ENCODE measurements at regions of chr17 and their contacts with region 1.

Region 1: DNA sequence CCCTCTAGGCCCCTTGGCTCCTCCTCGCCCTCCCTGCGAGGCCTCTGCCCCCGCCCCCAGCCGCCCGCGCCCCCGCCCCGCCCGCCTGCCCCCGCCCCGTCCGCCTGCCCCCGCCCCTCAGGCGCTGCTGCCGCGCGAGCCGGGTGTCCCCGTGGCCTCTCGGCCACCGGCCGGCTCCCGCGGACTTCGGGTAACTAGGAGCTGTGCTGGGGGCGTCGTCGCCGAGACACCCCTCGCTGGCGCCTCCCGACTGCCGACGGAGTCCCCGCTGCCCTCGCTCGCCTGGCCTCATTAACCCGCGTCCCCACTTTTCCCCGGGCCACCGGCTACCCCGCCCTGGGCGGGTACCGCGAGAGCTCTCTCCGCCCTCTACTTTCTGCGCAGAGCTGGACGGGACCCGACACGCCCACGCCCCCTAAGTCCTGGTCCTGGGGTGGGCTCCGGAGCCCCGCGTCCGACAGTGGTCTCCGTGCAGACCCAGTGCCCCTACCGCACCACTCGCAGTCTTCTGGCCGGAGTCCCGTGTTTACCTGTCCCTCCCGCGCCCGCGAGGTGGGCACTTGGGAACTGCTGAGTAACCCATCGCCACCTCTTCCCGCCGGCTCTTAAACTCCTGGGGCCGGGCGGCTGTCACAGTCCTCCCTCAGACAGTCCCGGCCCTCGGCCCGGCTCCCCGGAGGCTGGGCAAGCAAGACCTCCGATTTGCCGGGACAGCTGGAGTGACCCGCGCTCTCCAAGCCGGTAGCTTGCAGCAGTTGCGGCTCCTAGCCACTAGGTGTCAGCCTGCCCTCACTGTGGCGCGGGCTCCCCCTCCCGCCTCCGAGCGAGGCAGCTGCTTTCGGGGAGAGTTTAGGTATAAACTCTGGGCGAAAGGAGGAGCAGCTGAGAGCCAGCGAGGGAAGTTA is at the start of gene TLCD1:
- DNase-seq: peak; percentile 82 to 98
- H3K4me3 ChIP-seq: peak within 1 kb of the TSS; percentile 57
- H3K4me3 Mint-ChIP-seq: peak within 1 kb of the TSS; percentile 92
- H3K27ac Mint-ChIP-seq: peak within 1 kb of the TSS; percentile 96
- H3K4me1 ChIP-seq: peaks cover 23% of the 10 kb centered on the region
- H3K4me1 Mint-ChIP-seq: peaks cover 38% of the 10 kb centered on the region
- H3K27me3 ChIP-seq: no peaks in the 10 kb centered on the region
- H3K27me3 Mint-ChIP-seq: no peaks in the 10 kb centered on the region
- CTCF ChIP-seq: peak; percentile 98 to 99
- total RNA-seq, gene TLCD1: 31.7 and 37.9 TPM in 2 replicates

Region 2: GRCh38 chr17:28675980-28676379 is 50.5 kb before region 1 on chr17:
- CTCF ChIA-PET with region 1: interaction called, 10 read pairs
- POLR2A ChIA-PET with region 1: no interaction called
- intact Hi-C with region 1: no loop called
- DNase-seq: peak; percentile 50 to 59
- H3K4me3 ChIP-seq: no peak overlapping the region
- H3K4me3 Mint-ChIP-seq: no peak overlapping the region
- H3K27ac Mint-ChIP-seq: no peak overlapping the region
- H3K4me1 ChIP-seq: no peaks in the 10 kb centered on the region
- H3K4me1 Mint-ChIP-seq: no peaks in the 10 kb centered on the region
- H3K27me3 ChIP-seq: no peaks in the 10 kb centered on the region
- H3K27me3 Mint-ChIP-seq: no peaks in the 10 kb centered on the region
- CTCF ChIP-seq: peak in 1 of 2 experiments; percentile 88

Region 3: DNA sequence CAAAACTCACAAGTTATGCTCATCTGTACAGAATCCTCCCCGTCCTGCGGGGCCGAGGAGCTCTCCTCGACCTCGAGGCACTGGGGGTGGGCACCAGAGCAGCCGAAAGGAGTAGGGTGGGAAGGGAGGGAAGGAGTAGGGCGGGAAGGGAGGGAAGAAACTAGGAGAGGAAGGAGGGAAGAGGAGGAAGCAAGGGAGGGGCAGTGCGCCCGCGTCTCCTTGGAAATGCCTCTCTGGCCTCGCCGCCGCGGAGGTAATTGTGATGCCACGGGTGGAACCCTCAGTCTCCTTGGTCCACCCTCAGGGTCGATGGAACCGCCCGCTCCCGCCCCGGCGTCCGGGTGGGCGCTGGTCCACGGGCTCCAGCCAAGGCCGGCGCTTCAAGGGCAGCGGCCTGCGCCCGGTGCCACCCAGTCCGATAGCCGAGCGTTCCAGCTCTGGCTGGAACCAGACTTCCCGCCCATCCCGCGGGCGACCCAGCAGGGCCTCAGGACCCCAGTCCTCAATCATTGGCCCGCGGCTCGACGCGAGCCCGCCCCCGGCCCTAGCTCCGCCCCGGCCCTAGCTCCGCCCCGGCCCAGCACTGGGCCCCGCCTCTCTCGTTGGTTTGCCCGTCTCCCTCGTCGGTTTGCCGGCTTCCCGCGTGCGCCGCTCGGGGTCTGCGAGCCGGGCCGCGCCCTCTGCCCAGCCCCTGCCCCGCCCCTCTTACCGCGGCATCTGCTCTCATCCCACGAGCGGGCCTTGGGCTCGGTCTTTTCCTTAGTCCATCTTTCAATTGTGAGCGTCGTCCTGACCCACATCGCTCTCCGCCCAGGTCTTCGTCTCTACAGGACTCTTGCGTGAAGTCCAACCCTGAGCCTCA is 15.4 kb before region 1 on chr17:
- CTCF ChIA-PET with region 1: interaction called, 33 read pairs
- POLR2A ChIA-PET with region 1: interaction called, 213 read pairs
- intact Hi-C with region 1: no loop called
- DNase-seq: peak; percentile 95 to 98
- H3K4me3 ChIP-seq: peak overlapping the region; percentile 64
- H3K4me3 Mint-ChIP-seq: peak overlapping the region; percentile 82
- H3K27ac Mint-ChIP-seq: peak overlapping the region; percentile 87
- H3K4me1 ChIP-seq: peaks cover 11% of the 10 kb centered on the region
- H3K4me1 Mint-ChIP-seq: peaks cover 6% of the 10 kb centered on the region
- H3K27me3 ChIP-seq: no peaks in the 10 kb centered on the region
- H3K27me3 Mint-ChIP-seq: no peaks in the 10 kb centered on the region
- CTCF ChIP-seq: no peak

Region 4: DNA sequence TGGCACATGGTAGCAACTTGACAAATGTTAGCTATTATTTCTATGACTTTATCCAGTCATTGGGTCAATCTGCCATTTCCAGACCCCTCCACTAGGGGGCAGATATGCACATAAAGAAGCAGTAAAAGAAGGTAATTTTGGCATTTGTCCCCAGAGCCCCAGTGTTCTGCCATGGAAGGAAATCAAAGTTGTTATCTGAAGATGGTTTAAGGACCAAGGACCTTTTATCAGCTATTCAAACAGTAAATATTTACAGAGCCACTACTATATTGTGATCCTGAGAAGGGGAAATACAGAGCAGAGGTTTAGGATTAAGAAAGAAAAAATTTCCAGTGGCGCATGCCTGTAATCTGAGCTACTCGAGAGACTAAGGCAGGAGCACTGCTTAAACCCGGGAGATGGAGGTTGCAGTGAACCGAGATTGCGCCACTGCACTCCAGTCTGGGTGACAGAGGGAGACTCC is 37.4 kb after region 1 on chr17:
- CTCF ChIA-PET with region 1: interaction called, 69 read pairs
- POLR2A ChIA-PET with region 1: interaction called, 10 read pairs
- intact Hi-C with region 1: no loop called
- DNase-seq: peak; percentile 80 to 87
- H3K4me3 ChIP-seq: no peak overlapping the region
- H3K4me3 Mint-ChIP-seq: no peak overlapping the region
- H3K27ac Mint-ChIP-seq: peak overlapping the region; percentile 13
- H3K4me1 ChIP-seq: no peaks in the 10 kb centered on the region
- H3K4me1 Mint-ChIP-seq: no peaks in the 10 kb centered on the region
- H3K27me3 ChIP-seq: no peaks in the 10 kb centered on the region
- H3K27me3 Mint-ChIP-seq: no peaks in the 10 kb centered on the region
- CTCF ChIP-seq: peak; percentile 85 to 88

Region 5: DNA sequence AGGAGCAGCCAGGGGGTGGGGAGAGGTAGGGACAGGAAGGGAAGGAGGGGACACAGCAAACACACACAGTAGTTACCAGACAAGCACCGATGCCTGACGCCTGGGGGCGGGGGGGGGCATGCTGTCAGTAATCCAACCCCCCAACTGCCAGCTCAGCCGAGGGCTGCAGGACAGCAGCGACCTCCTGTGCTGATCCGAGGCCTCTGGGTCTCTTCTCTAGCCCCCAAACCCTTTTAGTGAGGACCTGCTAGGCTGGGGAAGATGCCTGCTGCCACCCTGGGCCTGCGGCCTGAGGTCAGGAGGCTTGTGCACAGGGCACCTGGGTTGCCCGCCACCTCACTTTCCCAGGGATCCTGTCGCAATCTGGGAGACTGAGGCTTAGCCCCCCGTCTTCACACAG is 159.5 kb after region 1 on chr17:
- CTCF ChIA-PET with region 1: no interaction called
- POLR2A ChIA-PET with region 1: no interaction called
- intact Hi-C with region 1: no loop called
- DNase-seq: no peak
- H3K4me3 ChIP-seq: no peak overlapping the region
- H3K4me3 Mint-ChIP-seq: no peak overlapping the region
- H3K27ac Mint-ChIP-seq: no peak overlapping the region
- H3K4me1 ChIP-seq: no peaks in the 10 kb centered on the region
- H3K4me1 Mint-ChIP-seq: no peaks in the 10 kb centered on the region
- H3K27me3 ChIP-seq: no peaks in the 10 kb centered on the region
- H3K27me3 Mint-ChIP-seq: no peaks in the 10 kb centered on the region
- CTCF ChIP-seq: no peak

Region 6: DNA sequence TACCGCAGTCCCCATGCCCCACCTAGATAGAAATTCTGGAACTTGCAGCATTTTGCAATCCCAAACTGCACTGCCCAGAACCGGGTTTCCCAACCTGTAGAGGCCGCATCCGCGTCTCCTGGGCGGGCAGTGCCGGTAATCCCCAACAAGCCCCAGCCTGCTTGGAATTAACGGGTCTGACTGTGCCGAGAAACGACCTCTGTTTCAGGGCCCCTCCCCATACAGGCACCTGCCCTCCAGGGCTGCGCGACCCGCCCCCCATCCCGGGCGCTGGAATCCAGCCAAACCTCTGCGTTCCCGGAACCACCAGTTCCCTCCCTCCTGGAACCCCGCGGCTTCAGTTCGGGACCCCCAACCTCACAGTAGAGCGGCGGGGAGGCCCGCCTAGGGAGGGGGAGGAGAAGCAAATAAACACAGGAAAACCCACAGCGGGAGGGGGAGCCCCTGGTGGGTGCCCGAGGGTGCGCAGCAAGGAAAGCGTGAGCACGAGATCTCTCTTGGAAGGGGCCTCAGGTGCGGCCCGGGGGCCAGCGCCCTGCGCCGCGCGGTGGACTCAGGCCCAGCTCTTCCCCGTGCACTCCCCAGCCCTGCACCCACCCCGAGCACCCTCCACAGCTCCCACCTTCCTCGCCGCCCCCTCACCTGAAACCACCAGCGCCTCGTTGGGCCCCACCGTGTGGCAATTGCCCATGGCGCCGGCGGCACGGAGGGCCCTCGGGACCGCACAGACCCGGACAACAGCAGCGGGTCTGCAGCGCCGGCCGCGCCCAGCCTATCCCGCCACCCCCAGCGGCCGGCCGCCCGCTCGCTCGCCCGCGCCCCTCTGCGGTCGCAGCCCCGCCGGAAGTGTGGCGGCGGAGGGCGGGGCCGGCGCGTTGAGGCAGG is 170.6 kb after region 1 on chr17 and contains the start of gene FLOT2:
- CTCF ChIA-PET with region 1: interaction called, 15 read pairs
- POLR2A ChIA-PET with region 1: interaction called, 3 read pairs
- intact Hi-C with region 1: loop called (anchors 1 kb)
- DNase-seq: peak; percentile 87
- H3K4me3 ChIP-seq: peak within 1 kb of the TSS; percentile 86
- H3K4me3 Mint-ChIP-seq: peak within 1 kb of the TSS; percentile 89
- H3K27ac Mint-ChIP-seq: peak within 1 kb of the TSS; percentile 80
- H3K4me1 ChIP-seq: peaks cover 23% of the 10 kb centered on the region
- H3K4me1 Mint-ChIP-seq: peaks cover 14% of the 10 kb centered on the region
- H3K27me3 ChIP-seq: no peaks in the 10 kb centered on the region
- H3K27me3 Mint-ChIP-seq: no peaks in the 10 kb centered on the region
- CTCF ChIP-seq: peak; percentile 40 to 49
- total RNA-seq, gene FLOT2: 182 and 189 TPM in 2 replicates

Region 7: GRCh38 chr17:28951991-28952975 is 225.8 kb after region 1 on chr17:
- CTCF ChIA-PET with region 1: interaction called, 12 read pairs
- POLR2A ChIA-PET with region 1: interaction called, 9 read pairs
- intact Hi-C with region 1: loop called (anchors 1 kb)
- DNase-seq: peak; percentile 97 to 99
- H3K4me3 ChIP-seq: peak overlapping the region; percentile 64
- H3K4me3 Mint-ChIP-seq: no peak overlapping the region
- H3K27ac Mint-ChIP-seq: no peak overlapping the region
- H3K4me1 ChIP-seq: peaks cover 10% of the 10 kb centered on the region
- H3K4me1 Mint-ChIP-seq: no peaks in the 10 kb centered on the region
- H3K27me3 ChIP-seq: no peaks in the 10 kb centered on the region
- H3K27me3 Mint-ChIP-seq: no peaks in the 10 kb centered on the region
- CTCF ChIP-seq: no peak

Measured in Caco-2 (cell line).